Calu3 (cell line): ENCODE measurements at regions of chr16 and their contacts with region 1.

Region 1: DNA sequence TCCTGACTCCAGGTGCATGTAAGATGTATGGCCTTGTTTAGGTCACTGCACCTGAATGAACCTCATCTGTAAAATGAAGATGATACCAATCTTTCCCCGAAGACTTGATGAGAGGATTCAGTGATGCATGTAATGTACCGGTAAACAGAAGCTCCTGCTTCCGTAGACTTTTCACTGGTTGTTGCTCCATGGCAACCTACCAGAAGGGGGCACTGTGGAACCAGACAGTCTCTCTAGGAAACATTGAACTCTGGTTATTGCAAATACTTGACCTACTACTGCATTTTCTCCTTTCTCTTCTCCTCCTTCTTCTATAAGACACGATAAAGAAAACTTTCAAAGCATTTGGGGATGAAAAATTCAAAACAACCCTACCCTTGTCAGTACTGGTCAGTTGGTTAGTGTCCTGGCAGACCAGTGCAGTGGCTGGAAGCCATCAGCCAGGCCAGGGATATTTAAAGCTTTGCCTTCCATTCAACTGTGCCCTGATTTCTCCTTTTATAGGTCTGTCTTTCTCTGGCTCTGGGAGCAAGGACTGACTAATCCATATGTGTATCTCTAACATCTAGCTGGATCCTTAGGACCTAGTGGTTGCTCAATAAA is 667.4 kb upstream of the SALL1 start:
- DNase-seq: peak; percentile 84
- H3K4me3 Mint-ChIP-seq: no peak overlapping the region
- H3K27ac Mint-ChIP-seq: no peak overlapping the region
- H3K4me1 Mint-ChIP-seq: peaks cover 24% of the 10 kb centered on the region
- H3K27me3 Mint-ChIP-seq: no peaks in the 10 kb centered on the region
- CTCF ChIP-seq: peak; percentile 88

Region 2: DNA sequence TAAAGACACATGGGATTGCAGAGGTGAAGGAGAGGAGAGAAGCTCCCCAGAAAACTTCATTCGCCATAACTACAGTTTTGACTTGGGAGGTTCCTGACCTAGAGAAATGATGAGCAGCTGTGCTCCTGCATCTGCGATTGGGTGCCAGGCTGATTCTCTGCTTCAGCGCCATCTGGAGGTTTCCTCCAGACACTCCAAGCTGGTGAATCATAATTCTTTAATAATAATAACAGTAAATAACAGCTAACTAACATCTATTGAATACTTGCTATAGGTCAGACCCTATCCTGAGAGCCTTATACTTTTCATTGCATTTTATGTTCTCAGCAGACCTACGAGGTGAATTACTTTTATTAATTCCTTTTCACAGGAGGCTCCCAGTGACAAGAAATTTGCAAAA is 152.7 kb after region 1 on chr16:
- CTCF ChIA-PET with region 1: interaction called, 47 read pairs
- intact Hi-C with region 1: loop called (anchors 1 kb)
- DNase-seq: peak; percentile 39
- H3K4me3 Mint-ChIP-seq: no peak overlapping the region
- H3K27ac Mint-ChIP-seq: no peak overlapping the region
- H3K4me1 Mint-ChIP-seq: no peaks in the 10 kb centered on the region
- H3K27me3 Mint-ChIP-seq: peaks cover 9% of the 10 kb centered on the region
- CTCF ChIP-seq: peak; percentile 55

Region 3: GRCh38 chr16:52050418-52050817 is 232.0 kb after region 1 on chr16:
- CTCF ChIA-PET with region 1: no interaction called
- intact Hi-C with region 1: loop called (anchors 10 kb)
- DNase-seq: peak; percentile 78
- H3K4me3 Mint-ChIP-seq: peak overlapping the region; percentile 19
- H3K27ac Mint-ChIP-seq: peak overlapping the region; percentile 71
- H3K4me1 Mint-ChIP-seq: peaks cover 32% of the 10 kb centered on the region
- H3K27me3 Mint-ChIP-seq: no peaks in the 10 kb centered on the region
- CTCF ChIP-seq: no peak

Region 4: GRCh38 chr16:53022374-53022773 is 1203.9 kb after region 1 on chr16:
- CTCF ChIA-PET with region 1: no interaction called
- intact Hi-C with region 1: loop called (anchors 10 kb)
- DNase-seq: peak; percentile 71
- H3K4me3 Mint-ChIP-seq: no peak overlapping the region
- H3K27ac Mint-ChIP-seq: no peak overlapping the region
- H3K4me1 Mint-ChIP-seq: no peaks in the 10 kb centered on the region
- H3K27me3 Mint-ChIP-seq: no peaks in the 10 kb centered on the region
- CTCF ChIP-seq: peak; percentile 78